Testis (tissue), 5 donors: ENCODE measurements at regions of chr5 and their contacts with region 1.

Region 1: DNA sequence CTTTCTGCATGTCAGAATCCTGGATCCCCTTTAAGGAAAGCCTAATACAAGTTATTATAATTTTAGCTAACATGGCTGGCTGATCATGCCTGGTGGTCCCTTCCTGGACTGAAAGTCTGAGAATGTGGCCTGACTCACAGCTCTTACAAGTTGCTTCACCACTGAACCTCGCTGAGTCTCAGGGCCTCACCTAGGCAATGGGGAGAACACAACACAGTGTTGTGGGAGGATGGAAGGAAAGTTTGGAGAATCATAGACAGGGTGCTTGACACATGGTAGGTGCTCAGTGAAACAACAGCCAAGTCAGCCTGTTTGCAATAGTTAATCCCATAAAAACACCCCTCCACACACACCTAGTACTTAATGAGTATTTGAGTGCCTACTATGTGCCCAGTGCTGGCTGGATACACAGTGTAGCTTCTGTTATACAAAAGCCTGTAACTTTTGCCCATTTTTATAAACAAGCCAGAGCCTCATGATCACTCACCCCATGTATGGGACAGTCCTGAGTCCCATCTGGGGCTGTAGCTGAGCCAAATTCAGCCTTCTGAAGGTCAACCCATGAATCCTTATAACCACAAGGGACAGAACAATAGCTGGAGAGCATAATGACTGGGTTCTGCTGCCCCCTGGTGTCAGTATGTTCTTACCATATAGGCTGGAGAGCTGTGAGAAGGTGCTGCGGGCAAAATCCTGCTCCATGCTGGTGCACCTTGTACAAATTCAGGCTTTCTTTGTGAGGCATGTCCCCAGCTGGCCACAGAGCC is 3.9 kb downstream of the ACSL6 start:
- DNase-seq: peak; percentile 94
- H3K4me3 ChIP-seq: no peak overlapping the region
- H3K27ac ChIP-seq: no peak overlapping the region
- H3K4me1 ChIP-seq: peaks cover 19% of the 10 kb centered on the region
- H3K27me3 ChIP-seq: no peaks in the 10 kb centered on the region
- CTCF ChIP-seq: peak; percentile 69 to 88 (median 77)
- POLR2A ChIP-seq: no peak

Region 2: DNA sequence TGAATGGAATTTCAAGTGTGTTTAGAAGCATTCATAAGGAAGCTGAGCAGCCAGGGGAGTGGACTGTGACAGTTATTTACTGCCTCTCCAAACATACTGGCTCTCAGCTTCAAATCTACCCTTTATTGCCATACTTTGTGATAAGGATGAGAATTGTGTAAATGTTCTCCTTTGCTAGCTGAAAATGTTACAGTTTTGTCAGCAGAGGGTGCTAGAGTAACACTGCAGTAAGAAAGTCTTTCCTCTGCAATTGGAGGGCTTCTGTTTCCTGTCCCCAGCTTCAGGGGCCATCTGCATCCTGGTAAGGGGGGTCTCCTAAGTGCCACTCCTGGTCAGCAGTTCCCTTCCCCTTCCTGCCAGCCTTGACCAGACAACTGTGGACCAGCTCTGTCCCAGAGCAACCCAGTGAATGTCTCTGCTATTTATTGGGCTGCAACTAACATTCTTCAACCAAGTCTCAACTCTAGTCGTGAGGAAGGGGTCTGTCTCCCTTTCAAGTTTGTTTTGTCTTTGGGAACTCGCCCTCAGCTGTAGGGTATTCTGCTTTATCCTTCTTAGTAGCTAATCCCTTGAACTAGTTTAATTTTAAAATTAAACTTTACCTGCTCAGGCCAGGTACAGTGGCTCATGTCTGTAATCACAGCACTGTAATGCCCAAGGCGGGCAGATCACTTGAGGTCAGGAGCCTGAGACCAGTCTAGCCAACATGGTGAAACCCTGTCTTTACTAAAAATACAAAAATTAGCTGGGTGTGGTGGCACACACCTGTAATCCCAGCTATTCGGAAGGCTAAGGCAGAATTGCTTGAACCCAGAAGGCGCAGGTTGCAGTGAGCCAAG is 417.9 kb before region 1 on chr5:
- intact Hi-C with region 1: loop called (anchors 5 kb)
- DNase-seq: no peak
- H3K4me3 ChIP-seq: no peak overlapping the region
- H3K27ac ChIP-seq: no peak overlapping the region
- H3K4me1 ChIP-seq: peaks cover 4% of the 10 kb centered on the region
- H3K27me3 ChIP-seq: no peaks in the 10 kb centered on the region
- CTCF ChIP-seq: peak; percentile 59 to 79 (median 63)
- POLR2A ChIP-seq: no peak

Region 3: GRCh38 chr5:131810510-131811249 is 196.9 kb before region 1 on chr5:
- intact Hi-C with region 1: loop called (anchors 5 kb)
- DNase-seq: no peak
- H3K4me3 ChIP-seq: no peak overlapping the region
- H3K27ac ChIP-seq: no peak overlapping the region
- H3K4me1 ChIP-seq: no peaks in the 10 kb centered on the region
- H3K27me3 ChIP-seq: no peaks in the 10 kb centered on the region
- CTCF ChIP-seq: no peak
- POLR2A ChIP-seq: no peak

Region 4: GRCh38 chr5:132176987-132177386 is 169.4 kb after region 1 on chr5:
- intact Hi-C with region 1: no loop called
- DNase-seq: no peak
- H3K4me3 ChIP-seq: no peak overlapping the region
- H3K27ac ChIP-seq: no peak overlapping the region
- H3K4me1 ChIP-seq: no peaks in the 10 kb centered on the region
- H3K27me3 ChIP-seq: no peaks in the 10 kb centered on the region
- CTCF ChIP-seq: no peak
- POLR2A ChIP-seq: no peak